ENCODE measurements at regions of chr3 and their contacts with region 1.

Region 1: GRCh38 chr3:141452036-141452435 is 34.8 kb upstream of the RASA2 start:
- DNase-seq: no peak

Region 2: GRCh38 chr3:141311496-141312353 is 140.3 kb before region 1 on chr3:
- intact Hi-C with region 1: loop called (anchors 5 to 10 kb)
- DNase-seq: peak; percentile 99

Region 3: GRCh38 chr3:141360888-141361598 is 91.0 kb before region 1 on chr3:
- intact Hi-C with region 1: loop called (anchors 5 kb)
- DNase-seq: no peak

Region 4: GRCh38 chr3:141368062-141368924 is 83.7 kb before region 1 on chr3 and contains the start of gene ZBTB38:
- intact Hi-C with region 1: loop called (anchors 5 kb)
- DNase-seq: peak; percentile 97
- total RNA-seq, gene ZBTB38: 101 to 125 TPM

Region 5: GRCh38 chr3:141690431-141691072 is 238.5 kb after region 1 on chr3:
- intact Hi-C with region 1: no loop called
- DNase-seq: no peak

Region 6: GRCh38 chr3:142077849-142078500 is 625.9 kb after region 1 on chr3:
- intact Hi-C with region 1: no loop called
- DNase-seq: no peak

Measured in posterior vena cava (tissue), 2 donors.